ENCODE measurements at regions of chr6 and their contacts with region 1.

Region 1: GRCh38 chr6:2952557-2953095 is 18.7 kb downstream of the SERPINB6 start:
- DNase-seq: peak; percentile 91
- ATAC-seq: peak; percentile 92
- H3K4me3 Mint-ChIP-seq: peak overlapping the region; percentile 22; the same call in 1 of the 2 replicates
- H3K27ac Mint-ChIP-seq: peak overlapping the region; percentile 33; the same call in 1 of the 2 replicates
- H3K4me1 Mint-ChIP-seq: peaks cover 24% of the 10 kb centered on the region
- H3K27me3 Mint-ChIP-seq: no peaks in the 10 kb centered on the region
- CTCF ChIP-seq: peak; percentile 96

Region 2: DNA sequence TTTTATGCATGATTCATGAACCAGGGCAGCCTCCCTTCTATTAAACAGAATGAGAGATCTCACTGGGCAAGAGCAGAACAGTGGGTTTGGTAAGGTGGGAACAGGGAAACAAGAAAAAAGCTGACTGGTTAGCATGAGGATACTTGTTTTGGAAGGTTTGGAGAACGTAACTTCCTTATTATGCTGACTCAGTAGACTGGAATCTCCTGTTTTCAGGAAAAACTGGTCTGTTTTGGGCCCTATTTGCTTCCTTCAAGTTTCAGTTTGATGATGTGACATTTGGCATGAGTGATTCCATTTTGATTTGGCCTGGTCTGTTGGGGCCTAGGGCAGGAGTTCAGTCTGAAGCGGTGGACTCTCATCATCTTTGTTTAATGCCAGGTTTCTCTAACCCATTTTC is 373.9 kb before region 1 on chr6:
- CTCF ChIA-PET with region 1: no interaction called
- POLR2A ChIA-PET with region 1: no interaction called
- DNase-seq: no peak
- ATAC-seq: no peak
- H3K4me3 Mint-ChIP-seq: no peak overlapping the region
- H3K27ac Mint-ChIP-seq: no peak overlapping the region
- H3K4me1 Mint-ChIP-seq: peaks cover 13% of the 10 kb centered on the region
- H3K27me3 Mint-ChIP-seq: no peaks in the 10 kb centered on the region; the same call in 1 of the 2 replicates
- CTCF ChIP-seq: no peak

Region 3: DNA sequence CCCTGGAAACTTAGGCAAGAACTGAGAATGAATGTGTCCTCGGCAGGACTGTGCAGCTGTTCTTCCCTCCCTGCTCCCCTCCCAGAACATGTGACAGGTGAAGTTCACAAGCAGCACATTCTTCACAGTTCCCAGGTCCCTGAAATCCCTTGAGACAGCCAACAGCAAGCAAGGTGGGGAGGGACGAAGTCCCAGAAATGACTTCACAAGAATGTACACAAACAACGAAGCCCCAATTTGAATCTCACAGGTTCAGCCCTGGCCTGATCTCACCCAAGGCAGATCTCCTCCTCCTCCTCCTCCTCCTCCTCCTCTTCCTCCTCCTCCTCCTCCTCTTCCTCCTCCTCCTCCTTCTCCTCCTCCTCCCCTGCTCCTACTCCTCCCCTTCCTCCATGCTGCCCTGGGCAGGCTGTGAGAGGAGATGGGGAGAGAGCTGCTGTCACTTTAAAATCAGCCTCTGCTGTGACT is 155.0 kb before region 1 on chr6:
- CTCF ChIA-PET with region 1: interaction called, 15 read pairs
- POLR2A ChIA-PET with region 1: no interaction called
- DNase-seq: no peak
- ATAC-seq: no peak
- H3K4me3 Mint-ChIP-seq: no peak overlapping the region
- H3K27ac Mint-ChIP-seq: no peak overlapping the region; the same call in 1 of the 2 replicates
- H3K4me1 Mint-ChIP-seq: peaks cover 8% of the 10 kb centered on the region; the same call in 1 of the 2 replicates
- H3K27me3 Mint-ChIP-seq: no peaks in the 10 kb centered on the region
- CTCF ChIP-seq: no peak

Region 4: DNA sequence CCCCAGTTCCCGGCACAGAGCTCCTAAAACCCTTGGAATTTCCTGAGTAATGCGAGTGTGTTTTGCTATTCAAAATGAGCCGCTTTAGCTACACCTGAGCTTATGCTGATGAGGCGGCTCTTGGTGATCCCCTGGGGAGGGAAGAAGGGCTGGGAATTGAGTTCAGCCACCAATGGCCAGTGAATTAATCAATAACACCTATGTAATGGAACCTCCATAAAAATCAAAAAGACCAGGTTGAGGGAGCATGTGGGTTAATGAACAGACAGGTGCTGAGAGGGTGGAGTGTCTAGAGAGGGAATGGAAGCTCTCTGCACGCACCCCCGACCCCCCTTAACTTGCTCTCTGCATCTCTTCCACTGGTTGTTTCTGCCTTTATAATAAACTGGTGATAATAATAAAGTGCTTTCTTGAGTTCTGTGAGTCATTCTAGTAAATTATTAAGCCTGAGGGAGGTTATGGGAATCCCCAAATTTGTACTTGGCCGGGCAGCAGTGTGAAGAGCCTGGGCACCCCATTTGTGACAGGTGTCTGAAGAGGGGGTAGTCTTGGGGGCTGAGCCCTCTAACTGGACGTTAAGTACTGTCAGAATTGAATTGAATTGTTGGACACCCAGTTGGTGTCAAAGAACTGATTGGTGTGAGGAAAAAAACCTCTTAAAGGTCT is 86.3 kb before region 1 on chr6:
- CTCF ChIA-PET with region 1: interaction called, 21 read pairs
- POLR2A ChIA-PET with region 1: interaction called, 3 read pairs
- DNase-seq: no peak
- ATAC-seq: peak; percentile 78
- H3K4me3 Mint-ChIP-seq: peak overlapping the region; percentile 47
- H3K27ac Mint-ChIP-seq: peak overlapping the region; percentile 89
- H3K4me1 Mint-ChIP-seq: peaks cover 71% of the 10 kb centered on the region
- H3K27me3 Mint-ChIP-seq: no peaks in the 10 kb centered on the region
- CTCF ChIP-seq: no peak

Region 5: DNA sequence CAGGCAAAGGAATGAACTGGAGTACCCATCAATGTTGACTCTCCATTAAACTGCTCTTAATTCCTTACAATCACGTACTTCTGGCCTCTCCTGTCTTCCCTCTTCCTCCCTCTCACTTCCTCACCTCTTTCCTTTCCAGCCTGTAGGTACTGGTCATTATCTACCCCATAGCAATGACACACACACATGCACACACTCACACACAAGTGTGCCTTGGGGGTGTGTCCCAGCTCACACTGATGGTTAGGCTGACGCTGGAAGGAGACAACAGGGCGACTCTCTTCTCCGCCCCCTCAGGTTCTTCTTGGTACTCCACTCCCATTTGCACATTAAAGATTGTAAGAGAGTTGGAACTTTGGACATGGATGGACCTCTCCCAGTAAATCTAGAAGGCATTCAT is 35.6 kb before region 1 on chr6:
- CTCF ChIA-PET with region 1: interaction called, 22 read pairs
- POLR2A ChIA-PET with region 1: no interaction called
- DNase-seq: no peak
- ATAC-seq: peak; percentile 43
- H3K4me3 Mint-ChIP-seq: no peak overlapping the region
- H3K27ac Mint-ChIP-seq: peak overlapping the region; percentile 86
- H3K4me1 Mint-ChIP-seq: peaks cover 70% of the 10 kb centered on the region
- H3K27me3 Mint-ChIP-seq: peaks cover 8% of the 10 kb centered on the region
- CTCF ChIP-seq: peak; percentile 20; the same call in 1 of the 2 replicates

Region 6: DNA sequence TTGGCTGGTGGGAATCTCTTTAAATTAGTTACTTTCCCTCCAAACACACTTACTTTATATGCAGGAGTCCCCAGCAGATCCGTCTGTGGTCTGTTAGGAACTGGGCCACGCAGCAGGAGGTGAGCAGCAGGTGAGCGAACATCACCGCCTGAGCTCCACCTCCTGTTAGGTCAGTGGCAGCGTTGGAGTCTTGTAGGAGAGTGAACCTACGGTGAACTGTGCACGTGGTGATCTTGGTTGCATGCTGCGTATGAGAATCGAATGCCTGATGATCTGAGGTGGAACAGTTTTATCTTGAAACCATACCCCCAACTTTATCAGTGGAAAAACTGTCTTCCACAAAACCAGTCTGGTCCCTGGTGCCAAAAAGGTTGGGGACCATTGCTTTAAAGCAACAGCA is 13.7 kb after region 1 on chr6:
- CTCF ChIA-PET with region 1: interaction called, 27 read pairs
- POLR2A ChIA-PET with region 1: interaction called, 4 read pairs
- DNase-seq: peak; percentile 30
- ATAC-seq: no peak; the same call in 1 of the 2 replicates
- H3K4me3 Mint-ChIP-seq: no peak overlapping the region
- H3K27ac Mint-ChIP-seq: no peak overlapping the region
- H3K4me1 Mint-ChIP-seq: peaks cover 38% of the 10 kb centered on the region
- H3K27me3 Mint-ChIP-seq: no peaks in the 10 kb centered on the region; the same call in 1 of the 2 replicates
- CTCF ChIP-seq: no peak

Region 7: GRCh38 chr6:2988426-2989331 is 36.1 kb after region 1 on chr6:
- CTCF ChIA-PET with region 1: interaction called, 203 read pairs
- POLR2A ChIA-PET with region 1: interaction called, 25 read pairs
- DNase-seq: peak; percentile 91
- ATAC-seq: peak; percentile 74
- H3K4me3 Mint-ChIP-seq: peak overlapping the region; percentile 93
- H3K27ac Mint-ChIP-seq: peak overlapping the region; percentile 100
- H3K4me1 Mint-ChIP-seq: peaks cover 54% of the 10 kb centered on the region
- H3K27me3 Mint-ChIP-seq: no peaks in the 10 kb centered on the region
- CTCF ChIP-seq: peak; percentile 43; the same call in 1 of the 2 replicates

Region 8: GRCh38 chr6:3052481-3053230 is 100.0 kb after region 1 on chr6:
- CTCF ChIA-PET with region 1: interaction called, 13 read pairs
- POLR2A ChIA-PET with region 1: no interaction called
- DNase-seq: no peak
- ATAC-seq: no peak
- H3K4me3 Mint-ChIP-seq: peak overlapping the region; percentile 83
- H3K27ac Mint-ChIP-seq: no peak overlapping the region
- H3K4me1 Mint-ChIP-seq: peaks cover 33% of the 10 kb centered on the region
- H3K27me3 Mint-ChIP-seq: peaks cover 16% of the 10 kb centered on the region
- CTCF ChIP-seq: no peak